Activated B cell treated with CpG ODN at 0.5 μM for 24 hours (primary cell): ENCODE measurements at regions of chr13 and their contacts with region 1.

Region 1: GRCh38 chr13:29791997-29792780 is 58.2 kb downstream of the UBL3 start:
- DNase-seq: no peak
- ATAC-seq: no peak
- H3K4me3 Mint-ChIP-seq: no peak overlapping the region
- H3K27ac Mint-ChIP-seq: no peak overlapping the region
- H3K4me1 Mint-ChIP-seq: peaks cover 48% of the 10 kb centered on the region
- H3K27me3 Mint-ChIP-seq: no peaks in the 10 kb centered on the region
- CTCF ChIP-seq: no peak

Region 2: DNA sequence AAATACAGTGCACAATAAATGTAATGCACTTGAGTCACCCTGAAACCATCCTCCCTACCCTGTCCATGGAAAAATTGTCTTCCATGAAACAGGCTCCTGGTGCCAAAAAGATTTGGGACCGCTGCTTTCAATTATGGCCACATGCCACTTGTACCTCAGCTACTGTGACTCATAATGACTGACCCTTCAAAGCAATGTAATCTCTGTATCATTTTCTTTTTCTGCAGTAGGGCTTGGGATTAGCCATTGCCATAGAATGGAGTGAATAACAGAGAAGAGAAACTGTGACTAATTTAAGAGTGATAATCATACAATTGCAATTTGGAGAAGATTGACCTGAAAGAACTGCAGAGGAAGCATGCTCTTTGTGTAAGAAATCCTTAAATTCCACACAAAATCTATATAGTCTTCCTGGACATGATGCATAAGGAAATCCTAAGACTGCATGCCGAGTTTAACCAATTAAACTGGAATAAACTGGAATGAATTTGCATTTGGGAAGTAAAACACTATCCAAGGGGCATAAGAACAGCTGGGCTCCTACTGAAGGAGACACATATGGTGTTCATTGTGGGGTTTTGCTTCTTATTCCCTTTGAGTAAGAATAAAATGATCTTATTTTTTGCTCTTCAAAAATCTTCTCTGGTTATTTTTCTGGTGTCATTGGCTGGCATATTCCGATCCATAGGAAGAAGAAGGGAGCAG is 137.2 kb before region 1 on chr13:
- CTCF ChIA-PET with region 1: no interaction called
- POLR2A ChIA-PET with region 1: interaction called, 13 read pairs
- intact Hi-C with region 1: no loop called
- DNase-seq: no peak
- ATAC-seq: no peak
- H3K4me3 Mint-ChIP-seq: no peak overlapping the region
- H3K27ac Mint-ChIP-seq: no peak overlapping the region
- H3K4me1 Mint-ChIP-seq: no peaks in the 10 kb centered on the region
- H3K27me3 Mint-ChIP-seq: peaks cover 14% of the 10 kb centered on the region
- CTCF ChIP-seq: no peak